Psoas muscle (tissue), 8 donors: ENCODE measurements at regions of chr5 and their contacts with region 1.

Region 1: DNA sequence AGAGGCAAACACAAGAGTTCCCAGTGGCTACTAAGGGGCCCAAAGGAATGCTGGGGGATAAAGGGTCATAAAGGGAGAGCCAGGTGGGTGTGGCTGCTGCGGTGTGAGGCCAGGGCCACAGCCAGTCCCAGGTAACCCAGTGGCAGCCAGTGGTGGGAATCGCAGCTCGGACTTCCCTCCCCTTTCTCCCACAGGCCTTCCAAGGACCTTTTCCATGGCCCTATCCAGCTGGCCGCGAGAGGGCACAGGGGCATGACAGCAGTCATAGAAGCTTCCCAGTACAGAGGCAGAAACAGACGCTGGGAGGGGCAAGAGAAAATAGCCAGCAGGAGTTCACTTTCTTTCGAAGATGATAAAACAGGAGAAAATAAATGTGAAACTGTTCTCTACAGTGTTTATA is 257.6 kb downstream of the SEMA5A start:
- DNase-seq: no peak
- ATAC-seq: no peak
- H3K4me3 ChIP-seq: no peak overlapping the region
- H3K27ac ChIP-seq: no peak overlapping the region
- H3K4me1 ChIP-seq: no peaks in the 10 kb centered on the region
- H3K27me3 ChIP-seq: no peaks in the 10 kb centered on the region
- CTCF ChIP-seq: no peak

Region 2: GRCh38 chr5:9324348-9325077 is 36.3 kb after region 1 on chr5:
- intact Hi-C with region 1: loop called in 1 of 2 experiments (anchors 1 kb)
- DNase-seq: no peak
- ATAC-seq: no peak
- H3K4me3 ChIP-seq: no peak overlapping the region
- H3K27ac ChIP-seq: no peak overlapping the region
- H3K4me1 ChIP-seq: no peaks in the 10 kb centered on the region
- H3K27me3 ChIP-seq: no peaks in the 10 kb centered on the region
- CTCF ChIP-seq: no peak

Region 3: DNA sequence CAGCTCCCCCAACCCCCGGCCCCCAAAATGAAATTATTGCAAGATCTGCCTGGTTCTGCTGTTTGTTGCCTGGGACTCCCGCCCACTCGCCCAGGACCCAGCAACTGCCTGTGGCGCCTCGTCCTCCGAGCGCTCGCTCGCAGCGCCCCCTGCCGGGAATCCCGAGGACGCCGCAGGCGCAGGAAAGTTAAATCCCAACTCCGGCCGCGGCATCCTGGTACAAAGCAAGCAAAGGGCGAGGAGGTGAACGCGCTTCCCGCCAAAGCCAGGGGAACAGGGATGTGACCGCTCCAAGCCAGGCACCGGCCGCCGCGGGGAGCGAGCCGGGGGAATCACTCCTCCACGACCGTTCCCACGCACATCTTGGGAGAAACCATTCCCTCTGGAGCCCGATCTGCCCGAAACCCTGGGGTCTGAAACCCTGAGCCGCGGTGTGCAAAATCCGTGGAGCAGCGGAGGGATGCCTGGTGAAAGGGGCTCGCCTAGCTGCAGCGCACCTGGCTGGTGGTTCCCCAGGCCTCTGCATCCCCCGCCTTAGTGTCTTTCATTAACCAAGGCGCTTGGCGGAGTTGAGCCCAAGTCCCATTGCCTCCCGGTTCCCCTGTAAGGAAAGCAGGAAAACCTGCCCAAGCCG is 256.4 kb after region 1 on chr5:
- intact Hi-C with region 1: no loop called
- DNase-seq: peak; percentile 81 to 87
- ATAC-seq: peak; percentile 78 to 90 (median 82)
- H3K4me3 ChIP-seq: peak overlapping the region; percentile 77
- H3K27ac ChIP-seq: no peak overlapping the region
- H3K4me1 ChIP-seq: peaks cover 9% of the 10 kb centered on the region
- H3K27me3 ChIP-seq: no peaks in the 10 kb centered on the region
- CTCF ChIP-seq: peak; percentile 77